IMR-90 (cell line): ENCODE measurements at regions of chr15 and their contacts with region 1.

Region 1: GRCh38 chr15:78872972-78873792 is 492 bp downstream of the MORF4L1 start:
- DNase-seq: peak; percentile 93
- ATAC-seq: peak; percentile 71
- H3K4me3 ChIP-seq: peak overlapping the region; percentile 67
- H3K27ac ChIP-seq: peak overlapping the region; percentile 94
- H3K4me1 ChIP-seq: peaks cover 2% of the 10 kb centered on the region; the same call in 1 of the 2 replicates
- H3K27me3 ChIP-seq: no peaks in the 10 kb centered on the region
- CTCF ChIP-seq: peak; percentile 60
- POLR2A ChIP-seq: peak; percentile 92
- RAD21 ChIP-seq: peak; percentile 35; the same call in 1 of the 2 replicates

Region 2: DNA sequence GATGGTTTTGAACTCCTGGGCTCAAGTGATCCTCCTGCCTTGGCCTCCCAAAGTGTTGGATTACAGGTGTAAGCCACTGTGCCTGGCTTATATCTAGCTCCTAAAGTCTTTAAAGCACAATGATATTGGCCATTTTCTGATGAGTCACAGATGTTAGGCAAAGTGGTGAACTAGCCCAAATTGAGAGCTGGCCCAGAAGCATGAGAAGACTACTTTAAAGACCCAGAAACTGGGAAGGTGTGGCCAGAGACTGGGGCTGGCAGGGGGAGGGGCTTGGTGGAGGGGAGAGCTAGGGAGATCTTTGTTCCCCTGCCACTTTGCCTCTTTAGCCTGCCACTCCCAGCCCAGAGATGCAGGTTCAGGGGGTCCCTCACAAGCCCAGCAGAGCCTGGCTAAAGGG is 274.0 kb before region 1 on chr15:
- CTCF ChIA-PET with region 1: no interaction called
- POLR2A ChIA-PET with region 1: no interaction called
- dilution Hi-C with region 1: no loop called
- in situ Hi-C with region 1: no loop called
- intact Hi-C with region 1: no loop called
- DNase-seq: no peak
- ATAC-seq: no peak
- H3K4me3 ChIP-seq: no peak overlapping the region
- H3K27ac ChIP-seq: no peak overlapping the region
- H3K4me1 ChIP-seq: no peaks in the 10 kb centered on the region
- H3K27me3 ChIP-seq: peaks cover 2% of the 10 kb centered on the region; the same call in 1 of the 2 replicates
- CTCF ChIP-seq: no peak
- POLR2A ChIP-seq: no peak
- RAD21 ChIP-seq: no peak

Region 3: GRCh38 chr15:78739996-78740903 is 132.9 kb before region 1 on chr15:
- CTCF ChIA-PET with region 1: no interaction called
- POLR2A ChIA-PET with region 1: no interaction called
- dilution Hi-C with region 1: no loop called
- in situ Hi-C with region 1: no loop called
- intact Hi-C with region 1: no loop called
- DNase-seq: peak; percentile 23
- ATAC-seq: peak; percentile 73
- H3K4me3 ChIP-seq: no peak overlapping the region
- H3K27ac ChIP-seq: no peak overlapping the region
- H3K4me1 ChIP-seq: no peaks in the 10 kb centered on the region
- H3K27me3 ChIP-seq: peaks cover 5% of the 10 kb centered on the region; the same call in 1 of the 2 replicates
- CTCF ChIP-seq: peak; percentile 46
- POLR2A ChIP-seq: no peak
- RAD21 ChIP-seq: no peak

Region 4: DNA sequence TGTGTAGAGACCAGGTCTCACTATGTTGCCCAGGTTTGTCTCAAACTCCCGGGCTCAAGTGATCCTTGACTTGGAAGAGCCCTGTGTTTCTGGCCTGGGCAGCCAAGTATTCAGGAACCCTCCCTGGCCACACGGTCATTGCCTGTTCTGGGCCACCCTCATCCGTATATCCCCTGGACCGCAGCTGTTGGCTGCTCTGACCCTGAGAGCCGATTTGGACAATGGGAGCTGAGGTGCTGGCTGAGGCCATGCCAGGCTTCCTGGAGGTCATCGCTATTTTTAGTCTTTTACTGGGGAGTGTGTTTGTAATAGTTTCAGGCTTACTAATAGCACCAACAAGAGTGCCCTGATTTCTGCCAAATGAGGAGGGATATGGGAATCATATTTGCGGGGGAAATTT is 122.6 kb before region 1 on chr15:
- CTCF ChIA-PET with region 1: no interaction called
- POLR2A ChIA-PET with region 1: no interaction called
- dilution Hi-C with region 1: no loop called
- in situ Hi-C with region 1: no loop called
- intact Hi-C with region 1: loop called (anchors 5 kb)
- DNase-seq: no peak
- ATAC-seq: peak; percentile 12
- H3K4me3 ChIP-seq: no peak overlapping the region
- H3K27ac ChIP-seq: no peak overlapping the region
- H3K4me1 ChIP-seq: no peaks in the 10 kb centered on the region
- H3K27me3 ChIP-seq: no peaks in the 10 kb centered on the region
- CTCF ChIP-seq: no peak
- POLR2A ChIP-seq: no peak
- RAD21 ChIP-seq: no peak

Region 5: GRCh38 chr15:78811124-78811824 is 61.9 kb before region 1 on chr15 and contains the start of gene ADAMTS7:
- CTCF ChIA-PET with region 1: interaction called, 6 read pairs
- POLR2A ChIA-PET with region 1: no interaction called
- dilution Hi-C with region 1: no loop called
- in situ Hi-C with region 1: no loop called
- intact Hi-C with region 1: loop called (anchors 1 kb)
- DNase-seq: peak; percentile 71
- ATAC-seq: peak; percentile 95
- H3K4me3 ChIP-seq: peak within 1 kb of the TSS; percentile 96
- H3K27ac ChIP-seq: peak within 1 kb of the TSS; percentile 70
- H3K4me1 ChIP-seq: peaks cover 8% of the 10 kb centered on the region
- H3K27me3 ChIP-seq: no peaks in the 10 kb centered on the region
- CTCF ChIP-seq: peak; percentile 71
- POLR2A ChIP-seq: no peak; the same call in 1 of the 2 replicates
- RAD21 ChIP-seq: peak; percentile 24
- total RNA-seq, gene ADAMTS7: 0.83 and 1.4 TPM in 2 replicates

Region 6: GRCh38 chr15:78859971-78860732 is 13.0 kb before region 1 on chr15:
- CTCF ChIA-PET with region 1: interaction called, 4 read pairs
- POLR2A ChIA-PET with region 1: interaction called, 3 read pairs
- dilution Hi-C with region 1: no loop called
- in situ Hi-C with region 1: no loop called
- intact Hi-C with region 1: loop called (anchors 1 kb)
- DNase-seq: peak; percentile 81
- ATAC-seq: peak; percentile 86
- H3K4me3 ChIP-seq: peak overlapping the region; percentile 61
- H3K27ac ChIP-seq: peak overlapping the region; percentile 91
- H3K4me1 ChIP-seq: peaks cover 2% of the 10 kb centered on the region
- H3K27me3 ChIP-seq: no peaks in the 10 kb centered on the region
- CTCF ChIP-seq: peak; percentile 47
- POLR2A ChIP-seq: no peak; the same call in 1 of the 2 replicates
- RAD21 ChIP-seq: peak; percentile 17; the same call in 1 of the 2 replicates